ENCODE measurements at regions of chr5 and their contacts with region 1.

Region 1: GRCh38 chr5:126917918-126918614 is 112.3 kb downstream of the MARCHF3 start:
- DNase-seq: no peak

Region 2: DNA sequence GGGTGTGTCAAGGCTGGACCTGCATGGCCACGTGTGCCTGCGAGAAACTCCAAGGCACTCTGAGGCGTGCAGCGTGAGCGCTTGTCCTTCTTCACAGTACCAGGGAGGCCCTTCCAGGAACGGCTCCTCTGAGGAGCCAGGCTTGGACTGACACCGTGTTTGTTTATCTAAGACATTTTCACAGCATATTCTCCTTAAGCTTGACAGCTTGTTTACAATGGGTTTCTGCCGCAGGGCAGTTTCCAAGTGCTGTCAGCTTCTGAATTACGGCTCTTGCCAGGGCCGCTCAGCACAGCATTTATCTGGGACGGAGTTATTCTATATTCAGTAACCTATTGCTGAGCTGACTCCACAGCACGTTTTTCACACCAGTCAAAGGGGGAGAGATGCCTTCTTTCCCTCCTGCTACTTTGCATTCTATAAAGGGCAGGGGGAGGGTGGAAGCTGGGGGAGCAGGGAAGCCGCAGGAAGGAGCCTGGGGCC is 42.7 kb before region 1 on chr5:
- intact Hi-C with region 1: loop called (anchors 10 kb)
- DNase-seq: no peak

Region 3: GRCh38 chr5:126972062-126972895 is 54.2 kb after region 1 on chr5:
- intact Hi-C with region 1: loop called (anchors 2 kb)
- DNase-seq: no peak

Region 4: DNA sequence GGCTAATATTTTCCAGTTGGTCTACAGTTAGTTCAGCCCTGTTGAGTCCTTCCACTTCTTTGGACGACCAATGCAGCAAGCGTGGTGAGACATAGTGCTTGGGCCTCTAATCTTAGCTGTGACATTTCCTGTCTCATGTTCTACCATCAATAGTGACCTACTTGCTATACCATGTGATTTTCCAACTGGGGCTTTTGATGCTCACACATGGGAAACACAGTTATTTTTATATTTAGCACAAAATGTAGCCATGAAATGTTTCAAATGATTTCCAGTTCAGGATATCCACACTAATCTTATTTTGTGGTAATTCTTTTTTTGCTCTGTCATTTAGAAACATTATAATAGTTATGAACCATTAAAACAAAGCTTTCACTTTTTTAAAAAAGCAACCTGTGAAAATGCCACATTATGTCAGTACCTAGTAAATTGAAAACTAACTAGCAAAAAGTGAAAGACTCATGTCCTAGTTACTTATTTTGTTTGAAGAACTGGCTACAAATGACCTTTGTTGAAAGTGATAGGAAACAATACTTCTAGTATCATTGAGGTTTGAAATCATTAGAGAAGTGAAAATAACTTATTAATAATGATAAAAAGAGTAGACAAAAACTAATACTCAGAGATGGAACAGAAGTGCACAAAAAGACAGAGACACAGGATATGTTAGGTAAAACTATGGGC is 94.0 kb after region 1 on chr5:
- intact Hi-C with region 1: loop called (anchors 2 kb)
- DNase-seq: no peak

Region 5: DNA sequence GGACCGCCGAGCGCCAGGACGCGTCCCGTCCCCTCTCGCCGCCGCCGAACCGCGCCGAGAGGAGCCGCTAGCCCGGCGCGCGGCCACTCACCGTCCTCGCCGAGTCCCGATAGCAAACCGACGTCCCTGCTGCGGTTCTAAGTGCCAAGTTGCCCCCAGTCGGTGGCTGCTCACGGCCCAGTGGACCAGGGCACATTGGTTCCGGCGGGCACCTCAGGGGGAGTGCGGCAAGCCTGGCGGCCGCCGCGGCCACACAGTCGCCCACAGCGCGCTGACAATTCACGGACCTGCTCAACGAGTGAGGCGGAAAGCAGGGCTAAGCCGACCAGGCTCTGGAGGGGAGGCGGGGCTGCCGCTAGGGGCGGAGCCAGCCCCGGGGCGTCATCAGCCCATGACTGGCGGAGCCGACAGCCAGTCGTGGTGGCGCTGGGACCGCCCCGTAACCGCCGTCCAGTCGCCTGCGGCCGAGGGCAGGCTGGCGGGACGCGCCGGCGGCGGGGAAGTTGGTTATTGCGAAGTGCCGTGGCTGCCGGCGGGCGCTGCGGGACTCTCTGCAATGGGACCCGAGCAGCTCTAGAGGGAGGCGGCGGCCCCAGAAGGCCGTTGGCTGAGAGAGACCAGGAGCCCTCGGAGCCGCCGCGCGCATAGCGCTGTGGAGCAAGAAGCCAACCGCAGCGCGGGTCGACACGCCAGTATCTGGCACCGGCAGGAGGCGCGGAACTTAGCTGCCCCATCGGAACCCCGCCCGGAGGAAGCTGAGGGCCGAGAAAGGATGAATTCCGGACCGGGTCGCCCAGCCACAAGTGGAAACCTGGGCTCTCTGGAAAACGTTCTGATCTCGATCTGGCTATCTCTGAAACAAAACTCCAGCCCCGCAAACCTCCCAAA is 112.4 kb after region 1 on chr5 and contains the start of gene MARCHF3:
- intact Hi-C with region 1: loop called (anchors 5 kb)
- DNase-seq: peak; percentile 99
- total RNA-seq, gene MARCHF3: 61.0 TPM

Measured in cardiac septum (tissue), 1 donor.